PC-3 (cell line): ENCODE measurements at regions of chr5 and their contacts with region 1.

Region 1: DNA sequence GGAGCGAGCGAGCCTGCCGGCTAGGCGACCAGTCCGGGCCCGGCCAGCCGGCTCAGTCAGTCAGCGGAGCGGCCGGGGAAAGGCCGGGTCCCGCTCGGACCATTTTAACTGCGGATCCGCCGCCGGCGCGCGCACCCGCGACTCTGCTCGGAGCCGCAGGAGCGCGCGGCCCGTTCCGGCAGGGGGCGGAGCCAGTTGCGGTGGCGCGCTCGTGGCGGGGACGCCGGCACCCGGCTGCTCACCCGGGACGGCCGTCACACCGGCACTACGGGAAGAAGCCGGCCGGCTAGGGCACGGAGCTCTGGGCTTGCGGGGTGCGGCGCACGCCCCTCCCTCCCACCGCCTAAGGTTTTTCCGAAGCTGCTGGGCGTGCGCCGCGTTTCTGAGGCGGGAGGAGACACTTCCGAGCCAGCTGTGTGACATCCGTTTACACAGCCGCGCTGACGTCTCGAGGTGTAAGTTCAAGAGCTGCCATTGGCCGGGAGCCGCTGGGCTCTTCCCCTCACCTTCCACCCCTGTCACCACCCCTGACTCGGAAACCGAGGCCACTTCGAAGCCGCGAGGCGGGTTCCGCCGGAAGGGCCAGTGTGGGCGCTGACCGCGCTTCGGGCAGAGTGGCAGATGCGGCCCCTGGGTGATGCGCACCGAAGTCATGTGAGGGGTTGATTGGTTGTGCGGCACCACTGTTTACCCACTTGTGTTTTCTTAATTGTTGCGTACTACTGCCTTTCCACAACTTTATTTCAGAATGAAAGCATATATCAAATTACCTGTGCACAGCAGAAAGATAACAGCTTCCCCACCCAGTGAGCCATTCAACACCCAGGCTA is at the start of gene FBXL17:
- DNase-seq: peak; percentile 95
- ATAC-seq: peak; percentile 71
- H3K4me3 ChIP-seq: peak within 1 kb of the TSS; percentile 81
- H3K27ac ChIP-seq: peak within 1 kb of the TSS; percentile 86
- H3K4me1 ChIP-seq: peaks cover 44% of the 10 kb centered on the region
- H3K27me3 ChIP-seq: no peaks in the 10 kb centered on the region
- CTCF ChIP-seq: no peak
- total RNA-seq, gene FBXL17: 8.8 and 10.6 TPM in 2 replicates

Region 2: GRCh38 chr5:107957051-107957450 is 425.1 kb before region 1 on chr5:
- CTCF ChIA-PET with region 1: interaction called, 10 read pairs
- POLR2A ChIA-PET with region 1: no interaction called
- intact Hi-C with region 1: no loop called
- DNase-seq: no peak
- ATAC-seq: no peak
- H3K4me3 ChIP-seq: no peak overlapping the region
- H3K27ac ChIP-seq: no peak overlapping the region
- H3K4me1 ChIP-seq: peaks cover 13% of the 10 kb centered on the region
- H3K27me3 ChIP-seq: no peaks in the 10 kb centered on the region
- CTCF ChIP-seq: no peak

Region 3: GRCh38 chr5:108415726-108416125 is 33.6 kb after region 1 on chr5:
- CTCF ChIA-PET with region 1: no interaction called
- POLR2A ChIA-PET with region 1: interaction called, 5 read pairs
- intact Hi-C with region 1: loop called (anchors 1 kb)
- DNase-seq: peak; percentile 74
- ATAC-seq: peak; percentile 91
- H3K4me3 ChIP-seq: no peak overlapping the region
- H3K27ac ChIP-seq: no peak overlapping the region
- H3K4me1 ChIP-seq: peaks cover 18% of the 10 kb centered on the region
- H3K27me3 ChIP-seq: no peaks in the 10 kb centered on the region
- CTCF ChIP-seq: no peak

Region 4: DNA sequence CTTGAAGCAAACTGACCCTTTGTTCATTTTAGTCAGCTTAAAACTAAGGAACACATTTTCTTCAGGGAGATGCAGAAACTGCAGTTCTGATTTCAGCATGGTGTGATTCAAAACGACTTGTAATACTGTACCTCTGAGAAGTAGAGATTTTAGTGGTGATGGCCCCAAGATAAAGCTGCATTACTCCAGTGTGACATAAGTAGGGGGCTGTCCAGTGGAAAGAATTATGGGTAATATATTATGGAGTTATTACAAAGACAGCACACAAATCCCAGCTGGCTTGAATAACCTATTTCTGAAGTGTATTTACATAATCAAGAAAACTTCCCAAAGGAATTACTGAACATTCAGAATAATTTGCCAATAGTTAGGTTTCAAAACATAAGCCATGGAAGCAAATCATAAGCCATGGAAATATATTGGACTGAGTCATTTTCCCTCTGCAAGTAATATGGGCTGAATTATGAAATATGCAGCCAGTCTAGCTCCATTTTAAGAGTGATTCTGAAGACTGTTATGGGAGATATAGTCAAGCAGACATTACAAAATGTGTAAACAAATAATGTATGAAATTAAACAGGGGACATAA is 133.4 kb after region 1 on chr5:
- CTCF ChIA-PET with region 1: no interaction called
- POLR2A ChIA-PET with region 1: interaction called, 12 read pairs
- intact Hi-C with region 1: no loop called
- DNase-seq: no peak
- ATAC-seq: no peak
- H3K4me3 ChIP-seq: no peak overlapping the region
- H3K27ac ChIP-seq: no peak overlapping the region
- H3K4me1 ChIP-seq: no peaks in the 10 kb centered on the region
- H3K27me3 ChIP-seq: peaks cover 25% of the 10 kb centered on the region
- CTCF ChIP-seq: no peak

Region 5: DNA sequence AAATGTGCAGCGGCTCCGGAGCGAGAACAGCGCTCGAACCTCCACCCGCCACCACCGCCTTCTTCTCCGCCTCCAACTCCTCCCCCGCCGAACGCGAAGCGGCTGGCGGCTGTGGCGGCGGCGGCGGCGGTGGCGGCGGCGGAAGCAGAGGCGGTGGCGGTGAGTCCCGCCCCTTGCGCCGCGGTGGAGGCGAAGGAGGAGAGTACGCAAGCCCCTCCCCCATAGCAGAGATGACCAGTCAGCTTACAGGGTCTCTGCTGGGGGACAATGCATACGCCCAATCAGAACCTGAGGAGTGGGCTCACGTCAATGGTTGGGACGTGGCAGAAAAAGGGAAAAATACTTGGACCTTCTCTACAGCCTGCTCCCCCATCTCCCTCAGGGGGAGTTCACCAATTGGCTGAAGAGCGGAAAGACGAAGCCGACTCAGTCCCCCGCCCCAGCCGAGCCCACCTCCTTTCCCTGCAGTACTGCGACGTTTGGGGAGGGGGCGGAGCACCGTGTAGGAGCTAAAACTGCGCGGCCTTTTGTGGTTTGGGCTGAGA is 1027.7 kb after region 1 on chr5 and contains the start of gene PJA2:
- CTCF ChIA-PET with region 1: no interaction called
- POLR2A ChIA-PET with region 1: no interaction called
- intact Hi-C with region 1: loop called (anchors 10 kb)
- DNase-seq: peak; percentile 99
- ATAC-seq: peak; percentile 83
- H3K4me3 ChIP-seq: peak within 1 kb of the TSS; percentile 88
- H3K27ac ChIP-seq: peak within 1 kb of the TSS; percentile 61
- H3K4me1 ChIP-seq: peaks cover 28% of the 10 kb centered on the region
- H3K27me3 ChIP-seq: no peaks in the 10 kb centered on the region
- CTCF ChIP-seq: no peak
- total RNA-seq, gene PJA2: 12.8 and 14.3 TPM in 2 replicates